Motor neuron (in vitro differentiated cells): ENCODE measurements at regions of chr1 and their contacts with region 1.

Region 1: DNA sequence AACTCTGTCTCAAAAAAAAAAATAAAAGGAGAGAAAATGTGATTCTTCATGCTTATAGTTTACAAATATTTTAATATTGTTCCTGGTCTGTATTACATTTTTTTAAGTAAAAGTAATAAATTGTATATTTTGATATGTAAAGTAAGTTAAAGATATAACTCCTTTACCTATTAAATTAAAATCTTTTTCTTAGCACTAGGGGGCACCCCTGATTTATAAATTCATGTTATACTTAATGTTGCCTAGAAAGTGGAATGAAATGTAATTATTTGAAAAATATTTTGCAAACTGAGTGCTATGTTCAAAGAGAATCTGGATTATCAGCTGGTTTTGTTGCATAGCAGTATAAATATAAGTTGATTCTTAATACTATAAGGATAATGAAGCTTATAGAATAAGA is 49.2 kb downstream of the RALGPS2 start:
- ATAC-seq: peak in 2 of 8 experiments; percentile 19 to 44
- H3K4me3 ChIP-seq: no peak overlapping the region
- H3K27ac ChIP-seq: no peak overlapping the region
- H3K4me1 ChIP-seq: no peaks in the 10 kb centered on the region

Region 2: DNA sequence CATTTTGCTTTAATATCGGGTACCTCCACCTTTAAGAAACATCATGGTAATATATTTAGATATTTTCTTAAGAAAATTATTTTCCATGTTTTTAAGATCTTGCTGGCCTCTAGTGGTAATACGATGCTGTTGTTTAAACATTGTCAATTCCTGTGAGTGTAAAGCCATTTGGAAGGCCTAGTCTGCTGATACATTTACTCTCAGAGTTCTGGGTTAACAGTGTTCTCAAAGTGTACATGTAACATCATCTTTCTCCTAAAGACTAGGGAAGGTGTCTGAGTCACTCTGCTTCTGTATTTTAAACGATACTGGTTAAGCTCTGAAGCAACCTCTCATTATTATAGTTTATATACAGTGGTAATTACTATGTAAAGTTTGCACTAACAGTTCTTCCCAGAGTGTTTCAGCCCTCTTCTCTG is 491.3 kb before region 1 on chr1:
- in situ Hi-C with region 1: no loop called
- ATAC-seq: peak in 7 of 8 experiments; percentile 49 to 70 (median 54)
- H3K4me3 ChIP-seq: no peak overlapping the region
- H3K27ac ChIP-seq: no peak overlapping the region
- H3K4me1 ChIP-seq: peaks cover 9 to 11% of the 10 kb centered on the region in 2 donors

Region 3: DNA sequence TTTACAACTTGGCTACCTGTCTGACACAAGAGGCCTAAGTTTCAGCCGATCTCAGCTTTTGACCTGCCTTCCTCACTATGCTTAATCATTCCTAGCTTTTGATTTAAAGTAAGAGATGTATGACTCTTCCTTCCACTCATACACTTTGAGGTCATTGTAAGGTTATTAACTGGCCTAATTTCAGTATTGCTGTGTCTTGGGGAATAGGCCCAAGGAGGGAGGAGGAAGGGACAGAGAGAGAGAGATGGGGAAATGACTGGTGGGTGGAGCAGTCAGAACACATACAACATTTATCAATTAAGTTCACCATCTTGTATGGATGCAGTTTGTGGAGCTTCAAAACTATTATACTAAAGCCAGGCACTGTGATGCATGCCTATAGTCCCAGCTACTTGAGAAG is 223.2 kb after region 1 on chr1:
- in situ Hi-C with region 1: loop called in 3 of 9 experiments (anchors 10 to 25 kb)
- ATAC-seq: no peak
- H3K4me3 ChIP-seq: no peak overlapping the region
- H3K27ac ChIP-seq: no peak overlapping the region
- H3K4me1 ChIP-seq: no peaks in the 10 kb centered on the region